Activated B cell treated with CpG ODN at 0.5 μM for 24 hours (primary cell): ENCODE measurements at regions of chr3 and their contacts with region 1.

Region 1: DNA sequence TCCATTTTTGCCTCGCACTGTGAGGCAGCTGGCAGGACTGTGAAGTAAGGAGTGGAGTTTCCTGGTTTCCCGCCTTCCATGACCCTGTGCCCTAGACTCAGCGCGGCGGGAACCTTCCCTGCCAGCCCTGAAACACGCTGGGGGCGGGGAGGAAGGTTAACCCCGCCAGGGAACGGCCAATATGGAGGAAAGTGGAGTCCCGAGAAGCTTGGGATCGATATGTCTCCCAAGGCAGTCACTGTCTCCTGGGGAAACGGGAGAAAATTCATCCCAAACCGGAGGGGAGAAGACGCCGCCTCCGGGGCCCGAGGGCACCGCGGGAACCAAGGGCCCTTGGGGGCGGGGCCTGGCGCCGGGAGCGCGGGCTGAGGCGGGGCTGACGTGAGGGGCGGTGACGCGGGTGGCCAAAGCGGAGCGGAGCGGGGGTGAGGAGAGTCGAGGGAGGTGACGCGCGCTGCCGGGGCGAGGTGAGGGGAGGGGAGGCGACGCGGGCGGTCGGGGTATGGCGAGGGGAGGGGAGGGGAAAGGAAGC is at the start of gene HMCES:
- DNase-seq: peak; percentile 91
- ATAC-seq: peak; percentile 62
- H3K4me3 Mint-ChIP-seq: peak within 1 kb of the TSS; percentile 91
- H3K27ac Mint-ChIP-seq: peak within 1 kb of the TSS; percentile 86
- H3K4me1 Mint-ChIP-seq: peaks cover 80% of the 10 kb centered on the region
- H3K27me3 Mint-ChIP-seq: no peaks in the 10 kb centered on the region
- CTCF ChIP-seq: no peak
- total RNA-seq, gene HMCES: 31.7 and 37.2 TPM in 2 replicates

Region 2: DNA sequence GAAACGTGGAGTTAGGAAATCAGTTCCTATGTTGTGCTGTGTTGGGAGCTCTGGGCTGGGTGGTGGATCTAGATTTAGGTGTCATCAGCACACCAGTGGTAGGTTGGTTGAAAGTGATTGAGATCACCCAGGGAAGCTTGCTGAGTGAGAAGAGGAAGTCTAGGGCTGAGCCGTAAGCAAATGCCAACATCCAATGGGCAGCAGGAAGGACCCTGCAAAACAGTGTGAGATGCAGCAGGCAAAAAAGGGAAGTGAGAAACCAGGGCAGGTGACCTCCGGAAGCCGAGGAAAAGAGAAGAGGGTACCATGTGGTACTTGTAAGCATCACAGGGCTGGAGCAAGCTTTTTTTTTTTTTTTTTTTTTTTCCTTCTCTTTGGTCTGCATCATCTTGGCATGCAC is 45.0 kb before region 1 on chr3:
- CTCF ChIA-PET with region 1: no interaction called
- POLR2A ChIA-PET with region 1: interaction called, 8 read pairs
- intact Hi-C with region 1: loop called (anchors 1 kb)
- DNase-seq: peak; percentile 53
- ATAC-seq: peak; percentile 93
- H3K4me3 Mint-ChIP-seq: peak overlapping the region; percentile 50
- H3K27ac Mint-ChIP-seq: peak overlapping the region; percentile 88
- H3K4me1 Mint-ChIP-seq: peaks cover 52% of the 10 kb centered on the region
- H3K27me3 Mint-ChIP-seq: no peaks in the 10 kb centered on the region
- CTCF ChIP-seq: no peak

Region 3: DNA sequence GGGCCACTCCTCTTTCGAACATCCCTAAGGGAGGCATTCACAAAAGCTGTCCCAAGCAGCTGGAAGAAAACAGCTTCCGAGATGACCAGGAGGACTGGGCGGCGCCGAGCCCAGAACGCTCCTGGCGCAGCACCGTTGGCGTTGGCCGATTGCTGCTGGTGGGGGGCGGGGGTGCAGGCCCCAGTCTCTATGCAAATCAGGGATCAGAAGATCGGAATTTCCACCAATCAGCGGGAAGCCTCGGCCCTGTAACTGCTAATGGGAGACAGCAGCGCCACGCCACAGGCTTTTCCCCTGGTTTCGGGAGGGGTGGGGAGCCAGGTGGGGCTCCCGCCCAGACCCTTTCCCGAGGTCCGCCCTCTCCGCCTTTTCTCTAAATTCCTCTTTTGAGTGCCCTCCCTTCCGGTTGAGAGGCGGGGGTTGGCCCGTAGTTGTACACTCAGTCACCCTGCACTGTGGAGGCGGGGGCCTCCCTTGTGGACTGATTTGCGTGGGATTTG is 27.1 kb after region 1 on chr3:
- CTCF ChIA-PET with region 1: interaction called, 4 read pairs
- POLR2A ChIA-PET with region 1: interaction called, 5 read pairs
- intact Hi-C with region 1: loop called (anchors 1 kb)
- DNase-seq: peak; percentile 46
- ATAC-seq: peak; percentile 87
- H3K4me3 Mint-ChIP-seq: peak overlapping the region; percentile 78
- H3K27ac Mint-ChIP-seq: peak overlapping the region; percentile 59
- H3K4me1 Mint-ChIP-seq: peaks cover 27% of the 10 kb centered on the region
- H3K27me3 Mint-ChIP-seq: no peaks in the 10 kb centered on the region
- CTCF ChIP-seq: no peak

Region 4: DNA sequence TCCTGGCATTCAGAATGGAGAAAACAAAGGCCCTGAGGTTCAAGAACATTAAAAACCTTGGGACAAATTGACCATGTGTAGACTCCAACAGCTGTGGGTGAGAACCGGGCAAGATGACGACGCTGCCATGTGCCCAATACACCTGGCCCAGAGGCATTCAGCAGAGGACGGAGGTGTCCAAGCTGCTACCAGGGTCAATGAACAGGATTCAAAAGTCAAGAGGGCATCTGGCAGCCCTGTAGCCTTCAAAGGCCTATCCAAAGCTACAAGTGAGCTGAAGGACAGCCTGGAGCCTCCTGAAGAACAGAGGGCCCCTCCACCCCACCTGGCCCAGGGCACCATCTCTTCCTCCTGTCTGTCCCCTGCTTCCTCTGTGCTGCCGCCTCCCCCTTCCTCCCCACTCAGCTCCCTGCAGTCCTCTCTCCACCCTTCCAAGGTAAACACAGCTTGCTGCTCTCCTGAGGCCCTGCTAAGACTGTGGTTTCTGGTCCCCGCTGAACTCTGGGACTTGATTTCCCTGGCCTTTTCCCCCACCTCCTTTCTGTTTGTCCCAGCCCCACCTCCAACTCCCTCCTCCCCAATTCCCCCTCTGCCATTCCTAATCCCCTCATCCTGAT is 57.7 kb after region 1 on chr3:
- CTCF ChIA-PET with region 1: no interaction called
- POLR2A ChIA-PET with region 1: no interaction called
- intact Hi-C with region 1: no loop called
- DNase-seq: no peak
- ATAC-seq: no peak
- H3K4me3 Mint-ChIP-seq: no peak overlapping the region
- H3K27ac Mint-ChIP-seq: no peak overlapping the region
- H3K4me1 Mint-ChIP-seq: peaks cover 2% of the 10 kb centered on the region
- H3K27me3 Mint-ChIP-seq: peaks cover 8% of the 10 kb centered on the region
- CTCF ChIP-seq: no peak